ENCODE measurements at regions of chr1 and their contacts with region 1.

Region 1: GRCh38 chr1:7576946-7577641 is 194.0 kb upstream of the VAMP3 start:
- DNase-seq: no peak
- H3K4me3 ChIP-seq: no peak overlapping the region
- H3K27ac ChIP-seq: no peak overlapping the region
- H3K4me1 ChIP-seq: no peaks in the 10 kb centered on the region
- H3K27me3 ChIP-seq: no peaks in the 10 kb centered on the region; a peak in 1 of 7 replicates
- CTCF ChIP-seq: peak; percentile 31 to 43 (median 37); a peak in 3 of 4 replicates
- EP300 ChIP-seq: no peak
- POLR2A ChIP-seq: no peak
- RAD21 ChIP-seq: peak; percentile 46 to 51

Region 2: DNA sequence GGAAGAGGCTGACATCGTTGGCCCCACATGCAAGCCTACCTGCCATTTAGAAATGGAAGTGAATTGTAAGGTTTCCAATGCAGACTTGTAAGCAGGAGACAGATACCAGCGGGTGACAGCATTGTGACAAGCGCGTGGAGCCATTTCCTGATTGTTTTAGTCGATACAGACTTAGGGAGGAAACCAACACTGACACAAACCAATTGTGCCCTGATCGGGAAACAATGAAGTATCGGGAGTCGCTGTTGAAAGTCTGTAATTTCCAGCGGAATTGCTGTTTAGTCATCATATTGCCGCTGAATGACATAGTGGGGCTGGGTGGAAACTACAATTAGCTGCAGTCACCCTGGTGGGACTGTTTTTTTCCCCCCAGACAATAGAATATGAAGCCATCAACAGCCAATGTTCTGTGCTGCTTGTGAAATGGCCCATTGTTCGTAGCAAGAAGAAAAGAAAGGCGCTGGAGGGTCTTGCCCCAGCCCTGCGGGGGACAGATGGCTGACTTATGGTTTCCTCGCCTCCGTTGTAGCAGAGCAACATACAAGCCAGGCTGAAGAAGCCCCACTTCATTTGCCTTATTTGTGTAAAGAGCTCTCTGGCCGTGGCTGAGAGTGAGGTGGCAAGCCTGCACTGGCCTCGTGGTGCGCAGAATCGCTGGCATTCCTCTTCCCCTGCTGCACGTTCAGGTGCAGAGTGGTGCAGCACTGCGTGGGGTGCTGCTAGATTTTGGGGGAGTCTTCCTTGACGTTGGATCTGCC is 329.1 kb before region 1 on chr1:
- CTCF ChIA-PET with region 1: no interaction called
- POLR2A ChIA-PET with region 1: no interaction called
- DNase-seq: no peak
- H3K4me3 ChIP-seq: no peak overlapping the region
- H3K27ac ChIP-seq: no peak overlapping the region
- H3K4me1 ChIP-seq: no peaks in the 10 kb centered on the region; a peak in 3 of 7 replicates
- H3K27me3 ChIP-seq: no peaks in the 10 kb centered on the region
- CTCF ChIP-seq: no peak
- EP300 ChIP-seq: no peak
- POLR2A ChIP-seq: no peak
- RAD21 ChIP-seq: no peak

Region 3: GRCh38 chr1:7561331-7561921 is 15.7 kb before region 1 on chr1:
- CTCF ChIA-PET with region 1: interaction called, 42 read pairs
- POLR2A ChIA-PET with region 1: interaction called, 3 read pairs
- DNase-seq: peak; percentile 58 to 86
- H3K4me3 ChIP-seq: no peak overlapping the region
- H3K27ac ChIP-seq: no peak overlapping the region
- H3K4me1 ChIP-seq: peaks cover 0 to 1% (median 0%) of the 10 kb centered on the region in 4 experiments; a peak in 3 of 7 replicates
- H3K27me3 ChIP-seq: no peaks in the 10 kb centered on the region; a peak in 1 of 7 replicates
- CTCF ChIP-seq: peak; percentile 75 to 99 (median 97)
- EP300 ChIP-seq: no peak
- POLR2A ChIP-seq: no peak
- RAD21 ChIP-seq: peak; percentile 62 to 69

Region 4: GRCh38 chr1:7594002-7594713 is 17.1 kb after region 1 on chr1:
- CTCF ChIA-PET with region 1: interaction called, 20 read pairs
- POLR2A ChIA-PET with region 1: interaction called, 3 read pairs
- DNase-seq: no peak
- H3K4me3 ChIP-seq: no peak overlapping the region
- H3K27ac ChIP-seq: no peak overlapping the region
- H3K4me1 ChIP-seq: no peaks in the 10 kb centered on the region; a peak in 1 of 7 replicates
- H3K27me3 ChIP-seq: no peaks in the 10 kb centered on the region
- CTCF ChIP-seq: no peak
- EP300 ChIP-seq: no peak
- POLR2A ChIP-seq: no peak
- RAD21 ChIP-seq: no peak

Region 5: GRCh38 chr1:7641587-7642417 is 64.7 kb after region 1 on chr1:
- CTCF ChIA-PET with region 1: interaction called, 36 read pairs
- POLR2A ChIA-PET with region 1: no interaction called
- DNase-seq: no peak
- H3K4me3 ChIP-seq: no peak overlapping the region
- H3K27ac ChIP-seq: no peak overlapping the region
- H3K4me1 ChIP-seq: no peaks in the 10 kb centered on the region
- H3K27me3 ChIP-seq: no peaks in the 10 kb centered on the region
- CTCF ChIP-seq: peak; percentile 7 to 40 (median 21); a peak in 2 of 4 replicates
- EP300 ChIP-seq: no peak
- POLR2A ChIP-seq: no peak
- RAD21 ChIP-seq: peak in 1 of 2 experiments; percentile 30; a peak in 2 of 4 replicates

Region 6: DNA sequence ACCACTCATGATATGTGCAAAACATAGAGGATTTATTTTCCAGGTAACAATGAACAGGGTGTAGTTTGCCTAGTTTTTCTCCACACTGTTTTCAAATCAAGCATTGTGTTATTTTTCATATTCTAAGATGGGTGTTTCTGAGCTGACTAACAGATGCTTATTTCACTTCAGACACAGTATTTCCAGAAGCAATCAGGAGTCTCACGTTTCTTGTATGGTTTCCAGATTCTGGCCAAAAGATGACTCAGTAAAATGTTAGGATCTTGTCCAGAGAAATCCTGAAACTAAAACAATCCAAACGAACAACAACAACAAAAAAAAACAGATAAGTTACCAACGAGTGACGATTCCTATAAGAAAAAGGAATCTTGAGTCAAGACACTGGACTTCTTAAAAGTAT is 270.5 kb after region 1 on chr1:
- CTCF ChIA-PET with region 1: no interaction called
- POLR2A ChIA-PET with region 1: no interaction called
- DNase-seq: no peak
- H3K4me3 ChIP-seq: no peak overlapping the region
- H3K27ac ChIP-seq: no peak overlapping the region
- H3K4me1 ChIP-seq: no peaks in the 10 kb centered on the region; a peak in 1 of 7 replicates
- H3K27me3 ChIP-seq: peaks cover 0 to 1% (median 0%) of the 10 kb centered on the region in 4 experiments; a peak in 1 of 7 replicates
- CTCF ChIP-seq: no peak
- EP300 ChIP-seq: no peak
- POLR2A ChIP-seq: no peak
- RAD21 ChIP-seq: no peak

Measured in H1 (cell line).